Transverse colon (tissue), 4 donors: ENCODE measurements at regions of chr2 and their contacts with region 1.

Region 1: DNA sequence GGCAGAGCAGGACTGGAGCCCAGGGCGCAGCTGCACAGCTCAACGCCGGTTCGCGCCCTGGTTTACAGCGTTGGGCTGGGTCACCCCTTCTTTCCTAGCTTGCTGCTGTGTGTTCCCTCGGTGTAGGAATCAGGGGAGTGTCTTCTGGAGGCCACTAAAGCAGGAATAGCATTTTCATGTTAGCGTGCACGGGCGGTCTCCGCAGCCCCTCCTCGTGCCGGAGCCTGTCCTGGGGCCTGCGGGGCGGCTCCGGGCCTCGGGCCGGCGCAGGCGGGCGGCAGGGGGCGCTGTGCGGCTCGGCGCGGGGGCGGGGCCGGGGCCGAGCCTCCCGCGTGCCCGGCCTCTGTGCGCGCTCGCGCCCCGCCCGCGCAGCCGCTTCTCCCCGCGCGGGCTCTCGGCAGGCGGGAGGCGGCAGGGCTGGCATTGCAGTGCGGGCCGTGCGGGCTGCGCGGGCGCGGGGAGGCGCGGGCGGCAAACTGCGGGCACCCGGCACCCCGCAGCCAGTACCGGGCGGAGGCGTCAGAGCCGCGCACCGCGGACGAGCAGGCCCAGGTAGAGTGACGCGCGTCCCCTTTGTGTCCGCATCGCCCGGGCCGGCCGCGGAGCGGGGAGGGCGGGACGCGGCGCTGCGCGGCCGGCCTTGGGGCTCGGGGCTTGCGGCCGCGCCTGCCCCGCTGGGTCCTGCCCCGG is at the start of gene RNF144A:
- DNase-seq: peak; percentile 66
- H3K4me3 ChIP-seq: peak within 1 kb of the TSS; percentile 59 to 96 (median 78)
- H3K27ac ChIP-seq: peak within 1 kb of the TSS; percentile 67 to 85 (median 72)
- H3K4me1 ChIP-seq: peaks cover 3 to 19% (median 12%) of the 10 kb centered on the region in 4 donors
- H3K27me3 ChIP-seq: no peaks in the 10 kb centered on the region
- CTCF ChIP-seq: peak; percentile 30 to 47 (median 42)
- EP300 ChIP-seq: no peak
- POLR2A ChIP-seq: no peak
- total RNA-seq, gene RNF144A: 24.0 to 145 (median 83.0) TPM

Region 2: DNA sequence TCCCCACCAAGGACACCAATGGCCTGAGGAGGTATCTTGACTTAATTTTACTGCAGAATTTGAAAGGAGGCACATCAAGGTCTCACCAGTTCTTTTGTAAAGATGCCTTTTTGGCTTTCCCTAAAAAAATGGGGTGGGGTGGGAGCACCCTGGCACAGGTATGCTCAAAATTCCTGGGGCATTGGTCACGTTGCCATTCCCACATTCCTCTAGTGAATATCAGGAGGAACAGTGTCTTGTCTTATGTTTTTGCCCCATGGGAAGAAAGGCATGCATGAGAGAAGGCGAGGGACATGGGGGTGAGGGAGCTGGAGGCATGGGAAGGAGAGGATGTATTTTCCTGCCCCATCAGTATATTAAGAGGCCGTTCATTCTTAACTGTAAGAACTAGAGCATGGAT is 326.8 kb before region 1 on chr2:
- in situ Hi-C with region 1: no loop called
- intact Hi-C with region 1: no loop called
- DNase-seq: no peak
- H3K4me3 ChIP-seq: no peak overlapping the region
- H3K27ac ChIP-seq: no peak overlapping the region
- H3K4me1 ChIP-seq: no peaks in the 10 kb centered on the region
- H3K27me3 ChIP-seq: no peaks in the 10 kb centered on the region
- CTCF ChIP-seq: no peak
- EP300 ChIP-seq: no peak
- POLR2A ChIP-seq: no peak

Region 3: DNA sequence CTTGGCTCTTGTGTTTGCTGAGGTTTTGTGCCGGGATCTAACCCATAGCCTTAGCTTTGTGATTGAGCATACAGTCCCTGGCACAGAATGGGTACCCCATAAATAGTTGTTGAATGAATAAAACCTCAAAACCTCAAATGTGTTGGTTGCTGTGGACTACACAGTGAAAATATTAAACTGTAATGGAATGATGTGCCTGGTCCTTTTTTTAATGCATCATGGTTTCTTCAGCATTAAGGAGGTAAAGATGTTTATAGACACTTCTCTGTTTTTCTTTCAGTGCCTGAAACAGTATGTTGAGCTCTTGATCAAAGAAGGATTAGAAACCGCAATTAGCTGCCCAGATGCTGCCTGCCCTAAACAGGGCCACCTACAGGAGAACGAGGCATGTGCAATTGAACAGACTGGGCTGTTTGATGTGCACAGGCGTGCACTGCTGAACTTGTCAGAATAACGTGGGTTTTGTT is 97.0 kb after region 1 on chr2:
- in situ Hi-C with region 1: loop called in 1 of 4 experiments (anchors 25 kb)
- intact Hi-C with region 1: loop called (anchors 10 kb)
- DNase-seq: peak; percentile 41
- H3K4me3 ChIP-seq: no peak overlapping the region
- H3K27ac ChIP-seq: peak overlapping the region in 1 of 4 donors; percentile 44
- H3K4me1 ChIP-seq: peaks cover 4 to 16% (median 7%) of the 10 kb centered on the region in 4 donors
- H3K27me3 ChIP-seq: no peaks in the 10 kb centered on the region
- CTCF ChIP-seq: peak; percentile 31 to 50 (median 38)
- EP300 ChIP-seq: no peak
- POLR2A ChIP-seq: no peak